ENCODE measurements at regions of chr14 and their contacts with region 1.

Region 1: GRCh38 chr14:74349757-74350156 is 1.5 kb downstream of the VRTN start:
- DNase-seq: no peak
- H3K4me3 ChIP-seq: no peak overlapping the region
- H3K27ac ChIP-seq: no peak overlapping the region
- H3K4me1 ChIP-seq: no peaks in the 10 kb centered on the region
- H3K27me3 ChIP-seq: peaks cover 0 to 51% (median 0%) of the 10 kb centered on the region in 4 donors
- CTCF ChIP-seq: no peak
- POLR2A ChIP-seq: no peak

Region 2: GRCh38 chr14:74414403-74415114 is 64.8 kb after region 1 on chr14:
- intact Hi-C with region 1: no loop called
- DNase-seq: no peak
- H3K4me3 ChIP-seq: no peak overlapping the region
- H3K27ac ChIP-seq: no peak overlapping the region
- H3K4me1 ChIP-seq: no peaks in the 10 kb centered on the region
- H3K27me3 ChIP-seq: peaks cover 0 to 85% (median 0%) of the 10 kb centered on the region in 4 donors
- CTCF ChIP-seq: no peak
- POLR2A ChIP-seq: no peak

Region 3: GRCh38 chr14:74478996-74479635 is 129.4 kb after region 1 on chr14:
- intact Hi-C with region 1: loop called (anchors 10 kb)
- DNase-seq: no peak
- H3K4me3 ChIP-seq: no peak overlapping the region
- H3K27ac ChIP-seq: no peak overlapping the region
- H3K4me1 ChIP-seq: no peaks in the 10 kb centered on the region
- H3K27me3 ChIP-seq: no peaks in the 10 kb centered on the region
- CTCF ChIP-seq: peak; percentile 28 to 62 (median 42)
- POLR2A ChIP-seq: no peak

Measured in esophagus squamous epithelium (tissue), 5 donors.